Activated naive CD4-positive, alpha-beta T cell treated with anti-CD3 and anti-CD28 coated beads for 36 hours (primary cell): ENCODE measurements at regions of chr17 and their contacts with region 1.

Region 1: DNA sequence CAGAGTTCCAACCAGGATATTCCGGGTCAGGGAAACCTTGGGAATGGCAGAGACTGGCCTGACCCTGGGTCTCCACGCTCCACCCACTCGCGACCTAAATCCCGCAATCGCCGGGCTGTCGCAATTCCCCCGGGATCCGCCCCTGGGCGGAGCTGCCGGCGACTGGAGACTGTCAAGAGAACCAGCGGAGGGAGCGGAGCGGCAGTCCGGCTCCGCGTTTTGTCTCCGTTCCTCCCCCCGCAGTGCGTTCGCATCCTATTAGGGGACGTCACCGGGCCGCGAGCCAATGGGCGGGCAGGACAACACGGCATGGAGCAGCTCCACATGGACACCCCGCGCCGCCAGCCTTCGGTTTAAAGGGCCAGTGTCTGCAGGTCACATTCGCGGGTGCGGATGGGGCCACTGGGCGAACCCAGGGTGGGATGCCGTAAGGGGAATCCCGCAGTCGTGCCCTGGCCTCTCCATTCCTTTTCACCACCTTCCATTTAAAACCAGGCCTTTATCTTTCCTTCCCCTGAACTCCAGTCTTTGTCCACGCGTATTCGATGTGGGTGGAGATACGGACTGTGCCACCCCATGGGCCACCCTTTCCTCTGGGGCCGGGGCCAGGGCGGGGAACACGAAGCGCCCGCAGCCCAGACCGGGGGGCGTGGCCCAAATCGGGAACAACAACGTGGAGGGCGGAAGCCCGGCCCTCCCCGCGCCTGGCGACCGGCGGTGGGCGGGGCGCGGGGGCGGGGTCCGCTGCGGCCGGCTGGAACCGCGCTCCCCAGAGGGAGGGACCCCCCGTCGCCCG is 764 bp upstream of the MNT start:
- DNase-seq: peak; percentile 100
- H3K4me3 Mint-ChIP-seq: peak overlapping the region; percentile 98
- H3K27ac Mint-ChIP-seq: peak overlapping the region; percentile 96
- H3K4me1 Mint-ChIP-seq: peaks cover 37% of the 10 kb centered on the region
- H3K27me3 Mint-ChIP-seq: no peaks in the 10 kb centered on the region

Region 2: DNA sequence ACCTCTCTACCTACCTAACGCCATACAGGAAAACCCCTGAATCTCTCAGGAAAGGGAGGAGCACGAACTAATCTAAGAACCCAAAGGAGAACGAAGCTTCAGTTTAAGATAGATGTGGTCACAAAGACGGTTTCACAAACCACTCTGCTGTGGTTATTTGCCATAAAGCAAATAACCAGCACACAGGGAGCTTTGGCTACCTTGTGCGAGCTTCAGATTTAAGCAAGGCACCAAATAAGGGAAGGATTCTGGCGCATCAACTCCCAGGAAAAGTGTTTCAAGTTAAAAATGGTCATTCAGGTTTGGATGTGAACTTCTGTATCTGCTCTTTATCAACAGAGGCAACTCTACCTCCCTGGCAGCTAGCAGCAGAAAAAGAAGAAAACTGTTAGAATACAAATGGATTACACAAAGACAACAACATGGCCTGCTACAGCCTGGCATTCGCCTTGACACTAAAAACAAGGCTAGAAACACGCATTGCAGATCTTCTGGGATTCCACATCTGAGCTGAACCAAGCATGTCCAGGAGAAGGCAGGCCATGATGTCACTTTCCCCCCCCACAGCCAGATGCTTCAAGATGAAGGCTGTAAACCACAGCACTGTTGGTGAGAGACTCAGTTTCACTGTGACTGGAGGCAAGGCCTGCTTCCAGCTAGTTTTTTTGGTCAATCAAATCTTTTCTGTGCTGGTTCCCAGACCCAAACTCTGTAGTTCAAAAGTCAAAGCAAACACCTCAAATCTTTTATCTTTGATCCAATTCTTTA is 141.7 kb before region 1 on chr17:
- CTCF ChIA-PET with region 1: no interaction called
- intact Hi-C with region 1: loop called (anchors 5 kb)
- DNase-seq: peak; percentile 96
- H3K4me3 Mint-ChIP-seq: peak overlapping the region; percentile 72
- H3K27ac Mint-ChIP-seq: peak overlapping the region; percentile 100
- H3K4me1 Mint-ChIP-seq: peaks cover 71% of the 10 kb centered on the region
- H3K27me3 Mint-ChIP-seq: no peaks in the 10 kb centered on the region

Region 3: GRCh38 chr17:2336215-2336851 is 65.3 kb before region 1 on chr17 and contains the start of gene TSR1:
- CTCF ChIA-PET with region 1: interaction called, 3 read pairs
- intact Hi-C with region 1: loop called (anchors 2 kb)
- DNase-seq: peak; percentile 93
- H3K4me3 Mint-ChIP-seq: peak within 1 kb of the TSS; percentile 100
- H3K27ac Mint-ChIP-seq: peak within 1 kb of the TSS; percentile 96
- H3K4me1 Mint-ChIP-seq: peaks cover 15% of the 10 kb centered on the region
- H3K27me3 Mint-ChIP-seq: no peaks in the 10 kb centered on the region
- total RNA-seq, gene TSR1: 51.1 to 51.5 TPM

Region 4: DNA sequence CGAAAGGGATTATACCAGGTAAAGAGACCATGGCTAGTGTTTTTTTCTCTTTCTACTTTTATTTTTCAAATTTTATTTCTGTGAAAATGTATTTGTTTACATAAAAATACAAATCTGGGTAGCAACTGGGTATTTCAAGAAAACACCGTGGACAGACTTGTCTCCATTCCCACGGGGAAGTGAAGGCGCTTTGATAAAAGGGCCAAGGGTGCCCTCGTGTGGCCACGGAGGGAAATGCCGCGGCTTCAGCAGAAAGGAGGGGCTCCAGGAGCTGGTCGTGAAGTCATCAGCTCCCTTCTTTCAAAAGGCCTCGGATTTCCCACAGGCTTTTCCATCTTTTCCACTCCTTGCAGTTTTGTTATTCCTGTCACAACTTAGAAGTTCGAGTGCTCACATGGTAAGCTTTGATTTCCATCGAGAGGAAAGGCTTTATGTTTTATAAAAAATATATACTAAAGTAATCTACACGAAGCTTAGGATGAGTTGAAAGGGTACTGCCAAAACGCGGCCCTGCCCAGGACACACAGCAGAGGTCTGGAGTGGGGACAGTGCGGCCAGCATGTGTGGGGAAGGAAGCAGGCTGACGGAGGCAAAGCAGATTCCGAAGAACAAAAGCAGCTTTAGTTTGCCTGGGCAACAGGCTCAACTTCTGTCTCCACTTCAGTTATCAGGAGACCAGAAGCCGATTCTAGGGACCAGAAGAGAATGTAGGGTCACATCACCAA is 14.5 kb after region 1 on chr17:
- CTCF ChIA-PET with region 1: interaction called, 20 read pairs
- intact Hi-C with region 1: loop called (anchors 1 kb)
- DNase-seq: peak; percentile 90
- H3K4me3 Mint-ChIP-seq: no peak overlapping the region
- H3K27ac Mint-ChIP-seq: peak overlapping the region; percentile 10
- H3K4me1 Mint-ChIP-seq: no peaks in the 10 kb centered on the region
- H3K27me3 Mint-ChIP-seq: no peaks in the 10 kb centered on the region

Region 5: GRCh38 chr17:2427215-2427614 is 25.6 kb after region 1 on chr17:
- CTCF ChIA-PET with region 1: no interaction called
- intact Hi-C with region 1: no loop called
- DNase-seq: no peak
- H3K4me3 Mint-ChIP-seq: no peak overlapping the region
- H3K27ac Mint-ChIP-seq: no peak overlapping the region
- H3K4me1 Mint-ChIP-seq: no peaks in the 10 kb centered on the region
- H3K27me3 Mint-ChIP-seq: no peaks in the 10 kb centered on the region

Region 6: GRCh38 chr17:2449486-2449885 is 47.9 kb after region 1 on chr17:
- CTCF ChIA-PET with region 1: no interaction called
- intact Hi-C with region 1: no loop called
- DNase-seq: no peak
- H3K4me3 Mint-ChIP-seq: no peak overlapping the region
- H3K27ac Mint-ChIP-seq: no peak overlapping the region
- H3K4me1 Mint-ChIP-seq: peaks cover 25% of the 10 kb centered on the region
- H3K27me3 Mint-ChIP-seq: no peaks in the 10 kb centered on the region

Region 7: GRCh38 chr17:2560658-2561057 is 159.0 kb after region 1 on chr17:
- CTCF ChIA-PET with region 1: no interaction called
- intact Hi-C with region 1: no loop called
- DNase-seq: no peak
- H3K4me3 Mint-ChIP-seq: no peak overlapping the region
- H3K27ac Mint-ChIP-seq: no peak overlapping the region
- H3K4me1 Mint-ChIP-seq: peaks cover 9% of the 10 kb centered on the region
- H3K27me3 Mint-ChIP-seq: no peaks in the 10 kb centered on the region

Region 8: DNA sequence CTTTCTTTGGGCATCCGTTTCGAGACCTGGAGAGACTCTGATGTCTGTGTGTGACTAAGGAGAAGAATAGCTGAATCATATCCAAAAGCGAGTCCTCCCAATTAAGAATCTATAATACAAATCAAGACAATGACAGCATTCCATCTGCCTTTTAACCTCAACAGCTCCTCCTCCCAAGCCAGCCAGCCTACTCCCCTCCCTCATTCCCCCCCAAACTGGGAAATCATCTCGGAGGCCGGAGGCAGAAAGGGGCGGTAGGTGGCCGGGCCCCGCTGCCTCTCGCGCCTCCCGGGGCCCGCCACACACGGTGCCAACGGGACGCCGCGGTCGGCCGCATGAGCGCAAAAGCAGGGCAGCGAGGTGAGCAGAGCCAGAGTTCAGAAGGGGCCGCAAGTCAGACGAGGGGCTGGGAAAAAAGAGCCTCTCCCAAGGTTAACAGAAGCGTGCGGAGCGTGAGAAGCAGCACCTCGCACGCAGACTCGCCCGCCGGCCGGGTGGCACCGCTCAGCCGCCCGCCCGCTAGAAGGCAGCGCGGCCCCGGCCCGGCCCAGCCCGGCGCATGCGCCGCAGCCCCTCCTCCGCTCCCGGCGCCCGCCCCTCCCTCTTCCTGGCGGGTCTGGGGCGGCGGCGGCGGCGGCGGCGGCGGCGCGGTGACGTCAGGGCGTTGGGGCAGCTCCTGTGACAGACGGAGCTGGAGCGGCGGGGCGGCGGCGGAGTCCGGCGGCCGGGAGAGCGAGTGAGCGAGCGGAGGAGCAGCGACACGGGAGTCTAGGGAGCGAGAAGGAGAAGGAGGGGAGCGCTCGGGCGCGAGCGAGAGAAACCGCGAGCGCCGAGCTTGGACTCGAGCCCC is 191.6 kb after region 1 on chr17 and contains the start of gene PAFAH1B1:
- CTCF ChIA-PET with region 1: no interaction called
- intact Hi-C with region 1: loop called (anchors 2 kb)
- DNase-seq: peak; percentile 95
- H3K4me3 Mint-ChIP-seq: peak within 1 kb of the TSS; percentile 90
- H3K27ac Mint-ChIP-seq: peak within 1 kb of the TSS; percentile 92
- H3K4me1 Mint-ChIP-seq: peaks cover 33% of the 10 kb centered on the region
- H3K27me3 Mint-ChIP-seq: no peaks in the 10 kb centered on the region
- total RNA-seq, gene PAFAH1B1: 142 to 145 TPM